Breast epithelium (tissue), 4 donors: ENCODE measurements at regions of chr10 and their contacts with region 1.

Region 1: DNA sequence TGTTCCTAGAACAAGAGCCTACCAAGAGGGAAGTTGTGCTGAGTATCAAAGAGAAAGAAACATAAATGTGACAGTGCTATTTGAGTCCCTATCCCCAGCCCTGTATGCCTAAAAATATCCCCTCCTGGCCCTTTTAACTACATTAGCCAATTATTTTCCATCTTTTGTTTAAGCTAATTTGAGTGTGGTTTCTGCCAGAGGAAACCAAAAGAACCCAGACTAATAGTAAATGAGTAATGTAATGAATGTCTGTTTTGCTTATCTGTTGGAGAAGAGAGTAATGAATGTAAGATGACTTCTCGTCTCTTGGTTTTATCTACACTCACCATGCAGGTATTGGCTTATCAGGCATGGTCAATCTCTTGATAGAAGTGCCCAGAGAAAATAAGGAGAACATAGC is 134.4 kb upstream of the CDK1 start:
- DNase-seq: no peak
- H3K4me3 ChIP-seq: no peak overlapping the region
- H3K27ac ChIP-seq: no peak overlapping the region
- H3K4me1 ChIP-seq: peaks cover 0 to 5% of the 10 kb centered on the region in 2 donors
- H3K27me3 ChIP-seq: no peaks in the 10 kb centered on the region
- CTCF ChIP-seq: no peak
- POLR2A ChIP-seq: no peak

Region 2: DNA sequence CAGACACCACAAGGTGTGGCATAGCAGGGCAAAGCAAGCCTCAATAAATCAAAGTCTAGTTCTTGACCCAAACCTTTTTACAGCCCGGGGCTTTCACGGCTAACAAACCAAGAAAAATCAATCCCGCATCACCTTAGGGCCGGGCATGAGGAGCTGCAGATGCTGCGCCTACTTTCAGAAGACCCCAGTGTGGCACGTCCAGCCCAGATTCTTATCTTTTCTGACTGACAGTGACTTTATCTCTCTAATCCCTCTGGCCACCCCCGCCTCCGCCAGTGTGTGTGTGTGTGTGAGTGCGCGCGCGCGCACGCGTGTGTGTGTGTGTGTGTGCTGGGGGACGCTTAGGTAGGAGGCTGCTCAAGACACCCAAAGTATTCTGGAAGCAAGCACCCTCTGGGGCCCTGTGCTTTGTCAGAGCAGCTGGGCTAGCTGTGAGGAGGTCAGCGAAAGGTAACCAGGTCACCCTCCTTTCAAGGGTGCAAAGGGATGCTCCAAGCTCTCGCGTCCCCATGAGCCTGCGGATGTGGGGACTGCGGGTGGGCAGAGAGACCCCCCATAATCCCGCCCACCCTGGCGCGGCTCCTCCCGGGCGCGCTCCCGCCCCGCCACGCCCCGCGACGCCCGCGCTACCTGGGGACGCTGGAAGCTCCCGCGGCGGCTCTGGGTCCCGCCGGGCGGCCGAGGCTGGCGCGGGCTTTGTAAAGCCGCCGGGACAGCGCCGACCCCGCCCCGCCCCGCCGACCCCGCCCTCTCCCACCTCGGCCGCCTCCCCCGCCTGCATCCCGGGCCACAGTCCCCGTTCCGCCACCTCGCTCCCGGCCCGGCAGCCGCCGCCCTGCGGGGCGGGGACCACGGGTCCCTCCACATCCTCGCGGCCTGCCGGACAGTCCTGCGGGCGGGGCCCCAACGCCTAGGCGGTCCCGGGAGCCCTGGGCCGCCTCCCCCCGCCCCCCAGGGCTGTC is 357.2 kb after region 1 on chr10:
- intact Hi-C with region 1: loop called (anchors 5 kb)
- DNase-seq: peak in 1 of 2 donors; percentile 51
- H3K4me3 ChIP-seq: peak overlapping the region; percentile 19 to 72 (median 57)
- H3K27ac ChIP-seq: peak overlapping the region in 1 of 2 donors; percentile 6
- H3K4me1 ChIP-seq: no peaks in the 10 kb centered on the region
- H3K27me3 ChIP-seq: no peaks in the 10 kb centered on the region
- CTCF ChIP-seq: no peak
- POLR2A ChIP-seq: no peak